ACHN (cell line): ENCODE measurements at regions of chr14 and their contacts with region 1.

Region 1: DNA sequence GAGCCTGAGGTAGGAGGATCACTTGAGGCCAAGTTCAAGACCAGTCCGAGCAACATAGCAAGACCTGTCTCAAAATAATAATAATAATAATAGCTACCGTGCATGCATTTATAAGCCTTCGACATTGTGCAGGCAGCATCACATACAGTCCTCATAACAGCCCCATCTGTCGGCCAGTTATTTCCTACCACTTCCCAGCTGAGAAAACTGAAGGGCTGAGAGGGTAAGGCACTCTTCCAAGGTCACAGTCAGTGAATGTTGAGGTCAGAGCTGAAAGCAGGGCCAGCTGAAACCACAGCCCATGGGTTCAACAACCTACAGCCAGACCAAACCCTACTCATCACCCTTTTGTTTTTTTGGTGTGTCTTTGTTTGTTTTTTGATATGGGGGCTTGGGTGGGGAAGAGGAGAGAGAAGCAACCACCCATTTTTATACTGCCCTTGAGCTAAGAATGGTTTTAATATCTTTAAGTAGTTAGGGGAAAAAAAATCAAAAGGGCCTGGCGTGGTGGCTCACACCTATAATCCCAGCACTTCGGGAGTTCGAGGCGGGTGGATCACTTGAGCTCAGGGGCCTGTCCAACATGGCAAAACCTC is 16.8 kb upstream of the ITPK1 start:
- DNase-seq: peak; percentile 60

Region 2: GRCh38 chr14:92945959-92946846 is 186.4 kb before region 1 on chr14:
- in situ Hi-C with region 1: loop called (anchors 25 kb)
- DNase-seq: peak; percentile 69

Region 3: GRCh38 chr14:93012951-93013719 is 119.4 kb before region 1 on chr14:
- in situ Hi-C with region 1: no loop called
- DNase-seq: no peak